MCF 10A (cell line): ENCODE measurements at regions of chr9 and their contacts with region 1.

Region 1: GRCh38 chr9:95127249-95128176 is 190.0 kb downstream of the FANCC start:
- DNase-seq: peak; percentile 81
- H3K4me3 Mint-ChIP-seq: no peak overlapping the region
- H3K27ac Mint-ChIP-seq: no peak overlapping the region
- H3K4me1 Mint-ChIP-seq: peaks cover 5% of the 10 kb centered on the region
- H3K27me3 Mint-ChIP-seq: no peaks in the 10 kb centered on the region
- CTCF ChIP-seq: peak; percentile 97

Region 2: DNA sequence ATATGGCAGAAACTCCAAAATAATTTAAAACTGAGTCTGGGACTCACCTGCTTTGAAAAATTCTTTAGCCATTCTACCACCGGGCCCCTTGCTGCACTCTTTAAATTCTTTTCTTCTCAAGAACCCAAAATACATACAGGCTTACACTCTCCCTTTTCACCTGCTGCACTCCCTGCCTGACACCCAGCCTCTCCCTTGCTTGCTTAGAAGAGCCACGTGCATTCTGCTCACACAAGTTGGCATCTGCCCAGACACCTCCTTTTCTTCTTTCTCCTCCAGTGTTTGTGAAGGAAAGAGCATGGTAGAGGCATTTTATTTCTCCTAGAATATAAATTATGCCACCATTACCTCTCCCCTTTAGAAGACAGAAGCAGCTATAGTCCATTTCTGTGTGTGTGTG is 440.1 kb before region 1 on chr9:
- CTCF ChIA-PET with region 1: interaction called, 457 read pairs
- POLR2A ChIA-PET with region 1: no interaction called
- intact Hi-C with region 1: no loop called
- DNase-seq: no peak
- H3K4me3 Mint-ChIP-seq: no peak overlapping the region
- H3K27ac Mint-ChIP-seq: no peak overlapping the region
- H3K4me1 Mint-ChIP-seq: no peaks in the 10 kb centered on the region
- H3K27me3 Mint-ChIP-seq: peaks cover 29% of the 10 kb centered on the region
- CTCF ChIP-seq: no peak

Region 3: DNA sequence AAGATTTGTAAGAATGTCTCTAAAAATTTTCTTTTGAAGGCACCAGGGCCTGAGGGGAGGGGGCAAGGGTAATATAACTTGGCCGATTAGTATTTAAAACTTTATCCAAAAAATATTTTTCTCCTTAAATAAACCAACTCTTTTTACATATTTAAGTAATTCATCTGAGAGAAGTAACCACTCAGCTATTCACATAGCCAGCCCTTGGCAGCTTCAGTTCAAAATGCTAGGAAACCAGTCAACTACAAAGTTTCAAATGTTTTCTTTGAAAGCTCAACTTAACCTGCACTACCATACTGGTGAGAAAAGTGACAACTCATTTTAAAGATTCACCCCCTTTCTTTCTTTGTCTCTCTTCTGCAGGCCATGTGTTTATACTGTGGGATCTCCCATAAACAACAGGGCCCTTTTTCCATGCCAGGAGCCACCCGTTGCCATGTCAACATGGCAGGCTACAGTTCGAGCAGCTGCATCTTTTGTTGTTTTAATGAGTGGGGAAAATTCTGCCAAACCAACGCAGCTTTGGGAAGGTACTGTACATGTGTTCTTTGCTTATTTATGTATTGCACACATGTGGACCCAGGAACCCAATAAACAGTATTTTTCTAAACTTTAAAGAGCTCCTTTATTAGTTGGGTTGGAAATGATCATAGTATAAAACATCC is 354.7 kb before region 1 on chr9:
- CTCF ChIA-PET with region 1: interaction called, 13 read pairs
- POLR2A ChIA-PET with region 1: no interaction called
- intact Hi-C with region 1: no loop called
- DNase-seq: no peak
- H3K4me3 Mint-ChIP-seq: no peak overlapping the region
- H3K27ac Mint-ChIP-seq: no peak overlapping the region
- H3K4me1 Mint-ChIP-seq: no peaks in the 10 kb centered on the region
- H3K27me3 Mint-ChIP-seq: no peaks in the 10 kb centered on the region
- CTCF ChIP-seq: no peak

Region 4: GRCh38 chr9:95071450-95071849 is 56.1 kb before region 1 on chr9:
- CTCF ChIA-PET with region 1: no interaction called
- POLR2A ChIA-PET with region 1: no interaction called
- intact Hi-C with region 1: no loop called
- DNase-seq: no peak
- H3K4me3 Mint-ChIP-seq: no peak overlapping the region
- H3K27ac Mint-ChIP-seq: no peak overlapping the region
- H3K4me1 Mint-ChIP-seq: peaks cover 15% of the 10 kb centered on the region
- H3K27me3 Mint-ChIP-seq: no peaks in the 10 kb centered on the region
- CTCF ChIP-seq: no peak

Region 5: GRCh38 chr9:95100071-95100625 is 27.4 kb before region 1 on chr9:
- CTCF ChIA-PET with region 1: interaction called, 14 read pairs
- POLR2A ChIA-PET with region 1: no interaction called
- intact Hi-C with region 1: no loop called
- DNase-seq: no peak
- H3K4me3 Mint-ChIP-seq: no peak overlapping the region
- H3K27ac Mint-ChIP-seq: no peak overlapping the region
- H3K4me1 Mint-ChIP-seq: no peaks in the 10 kb centered on the region
- H3K27me3 Mint-ChIP-seq: no peaks in the 10 kb centered on the region
- CTCF ChIP-seq: no peak

Region 6: DNA sequence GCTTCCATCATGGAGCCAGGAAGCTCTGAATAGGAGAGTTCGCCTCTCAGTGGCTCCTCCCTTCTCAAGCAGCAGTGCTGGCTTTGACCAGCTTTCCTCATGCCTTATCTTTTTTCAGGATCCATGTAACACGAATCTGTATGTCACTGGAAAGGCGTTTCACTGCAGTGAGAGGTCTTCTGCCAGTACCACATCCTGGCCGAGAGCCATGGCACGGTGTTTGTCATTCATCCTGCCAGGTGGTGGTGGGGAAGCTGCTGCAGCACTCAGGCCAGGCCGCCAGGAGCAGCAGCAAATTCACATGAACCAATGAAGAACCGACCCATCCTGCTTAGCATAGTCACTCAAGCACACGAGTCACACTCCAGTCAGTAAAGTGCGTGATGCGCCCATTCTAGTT is 11.0 kb after region 1 on chr9:
- CTCF ChIA-PET with region 1: interaction called, 23 read pairs
- POLR2A ChIA-PET with region 1: no interaction called
- intact Hi-C with region 1: no loop called
- DNase-seq: no peak
- H3K4me3 Mint-ChIP-seq: no peak overlapping the region
- H3K27ac Mint-ChIP-seq: no peak overlapping the region
- H3K4me1 Mint-ChIP-seq: no peaks in the 10 kb centered on the region
- H3K27me3 Mint-ChIP-seq: no peaks in the 10 kb centered on the region
- CTCF ChIP-seq: no peak

Region 7: DNA sequence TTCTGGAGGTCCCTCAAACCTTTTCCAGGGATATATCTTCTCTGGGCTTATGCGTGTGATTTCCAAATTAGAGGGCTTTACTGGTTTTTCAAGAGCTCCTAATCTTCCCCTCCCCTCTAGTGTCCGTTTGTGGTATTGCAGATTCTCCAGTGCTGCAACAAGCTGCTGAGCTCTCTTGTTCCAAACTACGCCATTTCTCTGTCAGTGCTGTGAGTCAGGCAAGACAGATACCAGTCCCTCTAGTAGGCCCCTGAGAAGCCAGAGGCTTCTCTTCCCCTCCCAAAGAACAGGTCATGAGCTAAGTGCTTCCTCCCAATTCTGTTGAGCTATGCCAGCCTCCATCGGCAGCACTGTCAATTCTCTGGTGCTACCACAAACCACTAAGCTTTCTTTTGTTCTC is 40.5 kb after region 1 on chr9:
- CTCF ChIA-PET with region 1: interaction called, 32 read pairs
- POLR2A ChIA-PET with region 1: interaction called, 3 read pairs
- intact Hi-C with region 1: loop called (anchors 1 kb)
- DNase-seq: peak; percentile 89
- H3K4me3 Mint-ChIP-seq: no peak overlapping the region
- H3K27ac Mint-ChIP-seq: no peak overlapping the region
- H3K4me1 Mint-ChIP-seq: peaks cover 13% of the 10 kb centered on the region
- H3K27me3 Mint-ChIP-seq: no peaks in the 10 kb centered on the region
- CTCF ChIP-seq: peak; percentile 93